SK-N-SH (cell line): ENCODE measurements at regions of chr1 and their contacts with region 1.

Region 1: DNA sequence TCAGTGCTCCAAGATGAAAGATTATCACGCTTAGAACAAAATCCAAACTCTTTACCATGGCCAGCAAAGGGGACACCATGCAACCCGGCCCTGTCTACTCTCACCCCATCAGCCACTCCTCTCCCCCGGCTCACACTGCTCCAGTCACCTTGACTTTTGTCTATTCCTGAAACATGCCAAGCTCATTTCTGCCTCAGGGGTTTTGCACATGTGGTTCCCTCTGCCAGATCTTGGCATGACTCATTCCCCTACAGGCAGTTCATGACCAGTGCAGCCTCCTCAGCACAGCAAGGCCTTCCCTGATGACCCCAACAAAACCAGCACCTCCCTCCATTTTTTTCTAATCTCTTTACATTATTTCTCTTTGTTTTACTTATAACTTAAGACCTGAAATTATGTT is 58.7 kb upstream of the GJB5 start:
- DNase-seq: peak; percentile 54
- H3K4me3 ChIP-seq: no peak overlapping the region
- H3K27ac ChIP-seq: no peak overlapping the region
- H3K4me1 ChIP-seq: peaks cover 0 to 24% of the 10 kb centered on the region in 2 experiments; a peak in 1 of 4 replicates
- H3K27me3 ChIP-seq: no peaks in the 10 kb centered on the region
- CTCF ChIP-seq: no peak
- EP300 ChIP-seq: peak in 1 of 2 experiments; percentile 33; a peak in 1 of 4 replicates
- RAD21 ChIP-seq: no peak; the same call in 1 of the 2 replicates

Region 2: GRCh38 chr1:34681480-34682451 is 14.4 kb before region 1 on chr1:
- CTCF ChIA-PET with region 1: interaction called, 17 read pairs
- POLR2A ChIA-PET with region 1: no interaction called
- DNase-seq: peak; percentile 66
- H3K4me3 ChIP-seq: peak overlapping the region in 1 of 2 experiments; percentile 23; a peak in 1 of 4 replicates
- H3K27ac ChIP-seq: no peak overlapping the region
- H3K4me1 ChIP-seq: no peaks in the 10 kb centered on the region
- H3K27me3 ChIP-seq: no peaks in the 10 kb centered on the region
- CTCF ChIP-seq: peak; percentile 52
- EP300 ChIP-seq: no peak
- RAD21 ChIP-seq: peak; percentile 79

Region 3: DNA sequence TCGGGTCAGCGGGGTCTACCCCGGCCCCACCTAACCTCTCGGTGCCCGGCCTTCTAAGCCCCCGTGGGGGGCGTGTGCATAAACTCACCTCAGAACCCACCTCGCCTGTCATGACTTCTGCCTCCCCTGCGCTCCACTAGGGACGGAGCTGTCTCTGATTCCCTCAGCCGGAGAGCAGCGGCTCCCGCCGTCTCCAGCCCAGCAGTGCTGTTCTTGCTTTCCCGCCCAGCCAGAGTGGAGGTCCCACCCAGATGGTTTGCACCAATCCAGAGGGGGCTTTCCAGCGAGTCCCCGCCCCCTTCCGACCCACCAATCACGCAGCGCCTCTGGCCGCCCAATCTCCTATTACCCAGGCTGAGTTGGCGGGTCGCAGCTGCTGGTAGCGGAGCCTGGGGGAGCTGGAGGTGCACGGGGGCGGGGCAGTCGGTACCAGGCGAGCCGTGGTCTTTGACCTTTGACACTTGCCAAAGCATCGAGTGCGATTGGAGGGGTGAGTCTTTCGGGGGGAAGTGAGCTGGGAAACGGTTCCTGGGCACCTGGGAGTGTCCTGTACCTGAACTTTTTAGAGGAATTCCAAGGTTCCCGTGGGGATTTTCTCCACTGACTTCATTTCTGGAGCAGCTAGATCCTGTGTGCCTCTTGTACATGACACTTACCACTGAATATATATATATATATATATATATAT is 1073.7 kb after region 1 on chr1 and contains the start of gene CLSPN:
- CTCF ChIA-PET with region 1: no interaction called
- POLR2A ChIA-PET with region 1: no interaction called
- DNase-seq: peak; percentile 98
- H3K4me3 ChIP-seq: peak within 1 kb of the TSS; percentile 83 to 89
- H3K27ac ChIP-seq: peak within 1 kb of the TSS; percentile 73 to 89
- H3K4me1 ChIP-seq: peaks cover 0 to 4% of the 10 kb centered on the region in 2 experiments; a peak in 2 of 4 replicates
- H3K27me3 ChIP-seq: no peaks in the 10 kb centered on the region
- CTCF ChIP-seq: no peak
- EP300 ChIP-seq: no peak
- RAD21 ChIP-seq: no peak
- polyA plus RNA-seq, gene CLSPN: 4.9 TPM in 2 replicates